ENCODE measurements at regions of chr4 and their contacts with region 1.

Region 1: DNA sequence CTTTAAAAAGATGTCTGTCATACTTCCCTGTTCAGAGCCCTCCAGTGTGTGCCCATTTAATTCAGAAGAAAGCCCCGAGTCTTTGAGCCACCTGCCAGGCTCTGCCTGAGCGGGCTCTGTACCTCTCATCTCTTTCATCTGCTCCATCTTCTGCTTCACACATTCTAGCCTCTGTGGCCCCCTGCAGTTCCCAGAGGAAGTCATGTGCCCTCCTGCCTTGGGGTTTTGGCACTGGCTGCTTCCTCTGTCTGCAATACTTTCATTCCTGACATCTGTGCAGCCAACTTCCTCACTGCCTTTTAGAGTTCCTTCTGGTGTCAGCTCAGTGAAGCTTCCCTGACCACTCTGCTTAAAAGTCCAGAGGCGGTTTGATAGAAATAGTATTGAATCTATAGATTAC is 6.2 kb upstream of the STK32B start:
- DNase-seq: no peak
- H3K4me3 ChIP-seq: no peak overlapping the region
- H3K27ac ChIP-seq: no peak overlapping the region
- H3K4me1 ChIP-seq: peaks cover 0 to 1% (median under 1%) of the 10 kb centered on the region in 4 donors
- H3K27me3 ChIP-seq: peaks cover 0 to 4% (median 0%) of the 10 kb centered on the region in 4 donors
- CTCF ChIP-seq: no peak
- EP300 ChIP-seq: no peak
- POLR2A ChIP-seq: no peak

Region 2: DNA sequence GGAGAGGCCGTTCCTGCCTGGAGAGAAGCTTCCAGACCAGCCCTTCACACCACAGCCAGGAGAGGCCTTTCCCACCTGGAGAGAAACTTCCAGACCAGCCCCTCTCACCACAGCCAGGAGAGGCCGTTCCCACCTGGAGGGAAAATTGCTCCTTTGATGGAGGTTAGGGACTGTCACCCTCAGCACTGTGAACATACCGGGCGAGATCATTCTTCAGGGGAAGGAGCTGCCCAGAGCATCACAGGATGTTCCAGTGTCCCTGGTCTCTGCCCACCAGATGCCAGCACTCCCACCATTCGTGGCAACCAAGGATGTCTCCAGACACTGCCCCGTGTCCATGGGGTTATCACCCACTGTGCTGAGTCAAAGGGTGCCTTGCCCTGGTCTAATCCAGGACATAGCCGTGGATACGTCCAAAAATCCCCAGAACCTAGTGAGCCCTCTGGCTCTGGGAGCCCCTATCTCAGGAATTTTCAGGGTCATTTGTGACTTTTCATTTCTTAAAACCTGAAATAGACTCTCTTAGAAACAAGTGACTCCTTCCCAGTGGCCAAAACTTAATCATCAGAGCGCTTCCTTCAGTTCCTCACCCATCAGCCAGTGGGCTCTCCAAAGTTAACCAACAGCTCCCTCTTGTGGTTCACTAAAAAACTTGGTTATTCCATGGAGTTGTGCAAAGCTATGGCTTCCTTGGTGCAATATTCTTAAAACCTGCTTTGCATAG is 767.6 kb after region 1 on chr4:
- intact Hi-C with region 1: loop called (anchors 10 kb)
- DNase-seq: no peak
- H3K4me3 ChIP-seq: no peak overlapping the region
- H3K27ac ChIP-seq: peak overlapping the region in 1 of 4 donors; percentile 55
- H3K4me1 ChIP-seq: peaks cover 0 to 6% (median 2%) of the 10 kb centered on the region in 4 donors
- H3K27me3 ChIP-seq: no peaks in the 10 kb centered on the region
- CTCF ChIP-seq: peak; percentile 61 to 68 (median 66)
- EP300 ChIP-seq: no peak
- POLR2A ChIP-seq: no peak

Measured in esophagus muscularis mucosa (tissue), 4 donors.